Left ventricle myocardium inferior (tissue), 1 donor: ENCODE measurements at regions of chr17 and their contacts with region 1.

Region 1: GRCh38 chr17:42315402-42316156 is 27.3 kb downstream of the STAT5A start:
- DNase-seq: no peak
- H3K4me3 ChIP-seq: no peak overlapping the region
- H3K27ac ChIP-seq: peak overlapping the region; percentile 34
- H3K4me1 ChIP-seq: peaks cover 82% of the 10 kb centered on the region
- H3K27me3 ChIP-seq: no peaks in the 10 kb centered on the region
- CTCF ChIP-seq: no peak

Region 2: DNA sequence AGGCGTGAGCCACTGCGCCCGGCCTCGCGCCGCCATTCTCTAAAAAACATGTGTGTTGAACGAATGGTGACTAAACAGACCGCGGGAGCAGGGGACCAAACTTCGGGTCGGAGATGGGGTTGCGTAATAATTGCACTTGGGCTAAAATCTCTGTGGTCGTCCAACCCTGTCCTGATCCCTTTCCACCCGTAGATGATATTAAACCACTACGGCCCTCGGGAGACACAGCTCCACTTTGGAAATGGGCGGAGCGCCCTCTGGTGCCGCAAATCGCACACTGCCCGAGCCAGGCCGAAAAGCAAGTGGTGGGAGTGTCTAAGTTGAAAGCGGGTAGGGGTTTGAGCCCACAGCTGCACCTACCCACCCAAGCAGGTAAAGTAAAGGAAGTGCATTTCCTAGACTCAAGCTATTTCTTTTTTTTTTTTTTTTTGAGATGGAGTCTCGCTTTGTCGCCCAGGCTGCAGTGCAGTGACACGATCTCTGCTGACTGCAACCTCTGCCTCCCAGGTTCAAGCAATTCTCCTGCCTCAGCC is 90.5 kb after region 1 on chr17:
- intact Hi-C with region 1: loop called (anchors 5 kb)
- DNase-seq: peak; percentile 88
- H3K4me3 ChIP-seq: peak overlapping the region; percentile 32
- H3K27ac ChIP-seq: peak overlapping the region; percentile 100
- H3K4me1 ChIP-seq: peaks cover 94% of the 10 kb centered on the region
- H3K27me3 ChIP-seq: no peaks in the 10 kb centered on the region
- CTCF ChIP-seq: peak; percentile 93

Region 3: GRCh38 chr17:42527273-42527703 is 211.7 kb after region 1 on chr17:
- intact Hi-C with region 1: loop called (anchors 5 kb)
- DNase-seq: peak; percentile 57
- H3K4me3 ChIP-seq: no peak overlapping the region
- H3K27ac ChIP-seq: peak overlapping the region; percentile 98
- H3K4me1 ChIP-seq: peaks cover 48% of the 10 kb centered on the region
- H3K27me3 ChIP-seq: no peaks in the 10 kb centered on the region
- CTCF ChIP-seq: peak; percentile 90